ENCODE measurements at regions of chr9 and their contacts with region 1.

Region 1: GRCh38 chr9:101731429-101731828 is 7.0 kb downstream of the GRIN3A start:
- DNase-seq: no peak
- ATAC-seq: no peak

Region 2: DNA sequence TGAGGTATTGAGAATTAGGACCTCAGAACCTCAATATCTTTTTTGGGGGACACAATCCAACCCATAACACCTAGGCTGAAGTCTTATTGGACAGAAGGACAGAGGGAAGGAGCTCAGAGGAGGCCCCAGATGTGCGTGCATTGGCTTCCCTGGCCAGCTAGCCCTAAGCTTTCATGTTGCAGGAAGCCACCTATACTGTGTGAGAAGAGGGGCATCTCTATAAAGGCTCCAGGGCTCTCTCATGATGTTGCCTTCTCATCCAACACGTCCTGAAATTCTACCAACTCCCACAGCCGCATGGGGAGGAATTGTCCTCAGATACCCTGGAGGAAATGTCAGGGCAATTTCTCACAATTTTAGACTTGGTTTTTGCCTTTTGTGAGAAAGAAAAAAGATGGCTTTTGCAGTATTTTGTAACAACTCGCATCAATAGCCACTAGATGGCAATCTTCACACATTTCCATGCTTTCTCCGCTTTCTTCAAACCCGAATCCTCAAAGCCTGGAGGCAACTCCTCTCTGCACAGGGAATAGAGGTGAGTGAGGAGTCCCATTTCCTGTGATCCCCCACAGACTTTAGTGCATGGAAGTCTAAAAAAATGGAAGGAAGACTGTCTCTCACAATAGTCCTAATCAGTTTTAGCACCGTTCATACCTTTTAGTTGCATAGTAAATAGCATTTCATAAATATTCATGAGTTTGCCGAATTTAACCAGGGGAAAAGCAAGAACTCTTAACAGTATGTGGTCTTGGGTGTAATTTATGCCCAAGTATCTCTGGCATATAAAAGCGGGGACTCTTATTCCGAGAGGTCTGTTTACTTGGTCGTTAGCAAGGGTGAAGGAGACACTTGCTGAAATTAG is 129.3 kb before region 1 on chr9:
- intact Hi-C with region 1: loop called (anchors 2 kb)
- DNase-seq: no peak
- ATAC-seq: no peak

Region 3: GRCh38 chr9:101674165-101674564 is 57.3 kb before region 1 on chr9:
- intact Hi-C with region 1: no loop called
- DNase-seq: no peak
- ATAC-seq: no peak

Region 4: GRCh38 chr9:101966691-101967090 is 235.3 kb after region 1 on chr9:
- intact Hi-C with region 1: no loop called
- DNase-seq: no peak
- ATAC-seq: no peak

Measured in Right ventricle myocardium inferior (tissue), 1 donor.